Activated CD4-positive, alpha-beta memory T cell treated with anti-CD3 and anti-CD28 coated beads for 36 hours (primary cell): ENCODE measurements at regions of chr17 and their contacts with region 1.

Region 1: DNA sequence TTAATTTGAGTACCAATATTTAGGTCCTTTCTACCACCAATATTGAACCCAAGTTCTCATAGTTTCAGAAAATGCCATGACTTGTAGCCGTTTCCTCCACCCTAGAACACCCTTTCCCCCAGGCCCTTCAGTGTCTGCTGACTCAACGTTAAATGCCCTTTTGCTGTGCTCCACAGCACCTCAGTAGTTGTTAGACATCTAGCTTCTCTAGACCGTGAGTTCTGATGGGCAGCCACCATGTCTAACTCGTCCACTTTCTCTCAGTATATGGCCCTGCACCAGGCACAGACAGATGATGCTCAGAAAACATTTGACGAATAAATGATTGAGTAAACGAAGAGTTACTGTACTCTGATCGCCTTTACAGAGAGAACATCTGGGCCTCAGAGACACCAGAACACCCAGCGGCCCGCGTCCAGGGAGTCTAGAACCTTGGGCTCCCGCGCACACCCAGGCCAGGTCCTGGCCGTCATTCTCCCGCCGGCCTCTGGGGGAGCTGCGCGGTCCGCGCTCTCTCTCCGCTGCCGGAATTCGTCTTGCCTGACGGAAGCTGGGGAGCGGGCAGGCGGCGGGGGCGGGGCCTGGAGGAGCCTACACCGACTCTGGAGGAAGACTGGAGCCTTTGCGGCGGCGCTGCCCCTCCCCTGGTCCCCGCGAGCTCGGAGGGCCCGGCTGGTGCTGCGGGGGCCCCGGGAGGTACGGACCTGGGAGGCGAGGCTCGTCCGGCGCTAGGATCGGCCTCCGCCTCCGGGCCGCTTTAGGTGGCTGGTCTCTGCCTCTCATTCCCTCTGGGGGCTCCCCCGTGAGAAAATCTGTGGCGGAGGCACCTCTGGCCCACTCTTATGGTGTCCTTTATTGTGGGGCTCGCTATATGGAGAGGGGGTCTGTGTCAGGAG is at the start of gene NKIRAS2:
- DNase-seq: peak; percentile 97
- H3K4me3 Mint-ChIP-seq: peak within 1 kb of the TSS; percentile 96
- H3K27ac Mint-ChIP-seq: peak within 1 kb of the TSS; percentile 38
- H3K4me1 Mint-ChIP-seq: peaks cover 47% of the 10 kb centered on the region
- H3K27me3 Mint-ChIP-seq: no peaks in the 10 kb centered on the region
- total RNA-seq, gene NKIRAS2: 15.6 to 16.1 TPM

Region 2: GRCh38 chr17:41864836-41865595 is 154.7 kb before region 1 on chr17 and contains the start of gene KLHL11:
- CTCF ChIA-PET with region 1: interaction called, 3 read pairs
- POLR2A ChIA-PET with region 1: interaction called, 3 read pairs
- intact Hi-C with region 1: loop called (anchors 10 kb)
- DNase-seq: peak; percentile 93
- H3K4me3 Mint-ChIP-seq: no peak within 1 kb of the TSS
- H3K27ac Mint-ChIP-seq: peak within 1 kb of the TSS; percentile 80
- H3K4me1 Mint-ChIP-seq: peaks cover 45% of the 10 kb centered on the region
- H3K27me3 Mint-ChIP-seq: no peaks in the 10 kb centered on the region
- total RNA-seq, gene KLHL11: 23.6 to 25.2 TPM

Region 3: DNA sequence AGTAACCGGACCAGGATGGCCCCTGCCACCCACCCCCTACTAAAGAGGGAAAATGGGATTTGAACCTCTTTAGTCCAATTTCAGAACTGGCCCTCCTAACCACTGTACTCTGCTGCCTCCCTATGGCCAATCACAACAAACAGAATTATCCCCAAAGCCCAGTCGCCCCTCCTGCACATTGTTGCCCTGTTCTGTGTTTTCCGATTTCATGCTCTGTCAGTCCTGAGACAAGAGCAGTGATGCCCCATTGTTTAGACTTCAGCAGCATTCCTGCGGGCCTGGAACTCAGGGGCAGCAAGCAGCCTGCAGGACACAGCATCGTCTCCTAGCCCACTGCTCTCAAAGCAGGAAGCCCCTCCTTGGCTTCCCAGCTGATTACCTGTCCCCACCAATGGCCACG is 134.0 kb before region 1 on chr17:
- CTCF ChIA-PET with region 1: no interaction called
- POLR2A ChIA-PET with region 1: no interaction called
- intact Hi-C with region 1: no loop called
- DNase-seq: peak; percentile 12
- H3K4me3 Mint-ChIP-seq: no peak overlapping the region
- H3K27ac Mint-ChIP-seq: no peak overlapping the region
- H3K4me1 Mint-ChIP-seq: no peaks in the 10 kb centered on the region
- H3K27me3 Mint-ChIP-seq: no peaks in the 10 kb centered on the region

Region 4: DNA sequence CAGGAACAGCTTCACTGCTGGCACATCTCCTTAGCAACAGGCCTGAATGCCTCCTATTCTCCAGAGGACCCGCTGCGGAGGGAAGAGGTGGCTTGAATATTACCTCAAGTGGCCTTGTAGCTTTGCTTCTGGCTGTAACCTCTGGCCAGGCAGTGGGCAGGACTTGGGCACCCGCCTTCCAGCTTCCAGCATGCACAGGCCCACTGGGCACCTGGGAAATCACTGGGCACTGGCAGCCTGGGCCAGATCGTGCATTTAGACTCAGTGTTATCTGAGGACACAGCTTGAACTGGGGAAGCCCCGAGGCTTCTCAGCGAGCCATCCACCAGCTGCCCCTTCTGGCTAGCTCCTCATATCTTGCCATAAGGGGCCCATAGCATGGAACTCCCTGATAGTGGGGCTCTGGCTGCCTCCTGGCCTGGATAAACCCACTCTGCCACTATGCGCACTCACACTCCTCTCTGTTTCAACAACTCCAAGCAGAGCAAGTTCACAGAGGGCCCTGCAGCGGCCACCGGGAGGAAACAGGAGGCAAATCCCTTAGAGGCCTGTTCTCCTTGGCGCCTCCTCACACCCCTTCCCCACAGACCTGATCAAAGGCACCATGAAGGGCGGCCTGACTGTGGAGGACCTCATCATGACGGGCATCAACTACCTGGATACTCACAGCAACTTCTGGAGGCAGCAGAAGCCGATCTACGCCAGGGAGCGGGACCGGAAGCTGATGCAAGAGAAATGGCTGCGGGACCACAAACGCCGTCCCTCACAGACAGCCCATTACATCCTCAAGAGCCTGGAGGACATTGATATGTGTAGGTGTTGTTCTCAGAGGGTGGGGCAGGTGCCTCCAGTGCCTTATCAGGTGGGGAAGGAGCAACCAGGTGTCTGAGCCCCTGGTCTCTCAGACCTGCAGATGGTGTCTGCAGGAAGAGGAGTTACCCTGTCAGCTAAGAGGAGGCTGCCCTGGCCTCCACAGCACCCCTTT is 81.5 kb before region 1 on chr17:
- CTCF ChIA-PET with region 1: no interaction called
- POLR2A ChIA-PET with region 1: no interaction called
- intact Hi-C with region 1: no loop called
- DNase-seq: no peak
- H3K4me3 Mint-ChIP-seq: no peak overlapping the region
- H3K27ac Mint-ChIP-seq: no peak overlapping the region
- H3K4me1 Mint-ChIP-seq: no peaks in the 10 kb centered on the region
- H3K27me3 Mint-ChIP-seq: no peaks in the 10 kb centered on the region

Region 5: GRCh38 chr17:41966463-41967140 is 53.2 kb before region 1 on chr17 and contains the start of gene CNP:
- CTCF ChIA-PET with region 1: interaction called, 58 read pairs
- POLR2A ChIA-PET with region 1: interaction called, 33 read pairs
- intact Hi-C with region 1: loop called (anchors 2 kb)
- DNase-seq: peak; percentile 93
- H3K4me3 Mint-ChIP-seq: peak within 1 kb of the TSS; percentile 78
- H3K27ac Mint-ChIP-seq: peak within 1 kb of the TSS; percentile 83
- H3K4me1 Mint-ChIP-seq: peaks cover 40% of the 10 kb centered on the region
- H3K27me3 Mint-ChIP-seq: no peaks in the 10 kb centered on the region
- total RNA-seq, gene CNP: 66.6 to 68.0 TPM

Region 6: GRCh38 chr17:42050393-42051012 is 30.7 kb after region 1 on chr17 and contains the start of gene C17orf113:
- CTCF ChIA-PET with region 1: interaction called, 11 read pairs
- POLR2A ChIA-PET with region 1: interaction called, 4 read pairs
- intact Hi-C with region 1: no loop called
- DNase-seq: peak; percentile 54
- H3K4me3 Mint-ChIP-seq: peak within 1 kb of the TSS; percentile 66
- H3K27ac Mint-ChIP-seq: no peak within 1 kb of the TSS
- H3K4me1 Mint-ChIP-seq: peaks cover 6% of the 10 kb centered on the region
- H3K27me3 Mint-ChIP-seq: peaks cover 39% of the 10 kb centered on the region
- total RNA-seq, gene C17orf113: 0.15 to 0.26 TPM

Region 7: DNA sequence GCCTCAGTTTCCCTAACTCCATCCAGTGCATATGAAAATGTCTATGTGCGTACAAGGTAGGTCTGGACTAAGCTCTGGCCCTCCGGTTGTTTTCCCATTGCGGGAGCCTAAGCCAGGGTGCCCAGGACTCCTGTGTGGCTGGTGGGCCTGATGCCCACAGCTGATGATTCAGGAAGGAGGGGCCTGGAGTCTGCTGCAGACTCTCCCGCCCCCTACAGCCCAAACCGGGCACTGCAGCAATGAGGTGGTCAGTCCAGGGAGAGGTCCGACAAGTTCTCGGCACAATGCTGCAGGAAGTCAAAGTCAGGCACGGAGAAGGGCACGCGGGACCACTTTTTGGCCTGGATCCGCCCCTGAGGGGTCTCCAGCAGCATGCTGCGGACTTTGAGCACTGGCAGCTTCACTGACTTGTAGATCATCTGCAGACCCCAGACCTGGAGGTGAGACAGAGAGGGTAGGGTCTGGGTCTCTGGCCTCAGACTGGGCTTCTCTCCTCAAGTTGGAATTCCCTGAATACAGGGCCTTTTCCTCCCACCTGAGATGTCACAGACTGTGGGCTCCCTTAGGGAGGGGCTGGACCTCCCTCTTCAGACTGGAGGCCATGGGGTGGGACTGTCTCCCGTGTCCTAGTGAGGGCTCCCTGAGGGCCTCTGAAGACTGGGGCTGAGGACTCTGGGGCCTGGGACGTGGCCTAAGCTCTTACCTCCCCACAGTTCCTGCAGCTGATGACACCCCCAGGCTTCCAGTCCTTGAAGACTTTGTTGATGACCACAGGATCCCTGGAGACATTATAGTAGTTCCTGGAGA is 82.0 kb after region 1 on chr17:
- CTCF ChIA-PET with region 1: interaction called, 211 read pairs
- POLR2A ChIA-PET with region 1: no interaction called
- intact Hi-C with region 1: no loop called
- DNase-seq: peak; percentile 84
- H3K4me3 Mint-ChIP-seq: no peak overlapping the region
- H3K27ac Mint-ChIP-seq: no peak overlapping the region
- H3K4me1 Mint-ChIP-seq: peaks cover 8% of the 10 kb centered on the region
- H3K27me3 Mint-ChIP-seq: peaks cover 13% of the 10 kb centered on the region

Region 8: DNA sequence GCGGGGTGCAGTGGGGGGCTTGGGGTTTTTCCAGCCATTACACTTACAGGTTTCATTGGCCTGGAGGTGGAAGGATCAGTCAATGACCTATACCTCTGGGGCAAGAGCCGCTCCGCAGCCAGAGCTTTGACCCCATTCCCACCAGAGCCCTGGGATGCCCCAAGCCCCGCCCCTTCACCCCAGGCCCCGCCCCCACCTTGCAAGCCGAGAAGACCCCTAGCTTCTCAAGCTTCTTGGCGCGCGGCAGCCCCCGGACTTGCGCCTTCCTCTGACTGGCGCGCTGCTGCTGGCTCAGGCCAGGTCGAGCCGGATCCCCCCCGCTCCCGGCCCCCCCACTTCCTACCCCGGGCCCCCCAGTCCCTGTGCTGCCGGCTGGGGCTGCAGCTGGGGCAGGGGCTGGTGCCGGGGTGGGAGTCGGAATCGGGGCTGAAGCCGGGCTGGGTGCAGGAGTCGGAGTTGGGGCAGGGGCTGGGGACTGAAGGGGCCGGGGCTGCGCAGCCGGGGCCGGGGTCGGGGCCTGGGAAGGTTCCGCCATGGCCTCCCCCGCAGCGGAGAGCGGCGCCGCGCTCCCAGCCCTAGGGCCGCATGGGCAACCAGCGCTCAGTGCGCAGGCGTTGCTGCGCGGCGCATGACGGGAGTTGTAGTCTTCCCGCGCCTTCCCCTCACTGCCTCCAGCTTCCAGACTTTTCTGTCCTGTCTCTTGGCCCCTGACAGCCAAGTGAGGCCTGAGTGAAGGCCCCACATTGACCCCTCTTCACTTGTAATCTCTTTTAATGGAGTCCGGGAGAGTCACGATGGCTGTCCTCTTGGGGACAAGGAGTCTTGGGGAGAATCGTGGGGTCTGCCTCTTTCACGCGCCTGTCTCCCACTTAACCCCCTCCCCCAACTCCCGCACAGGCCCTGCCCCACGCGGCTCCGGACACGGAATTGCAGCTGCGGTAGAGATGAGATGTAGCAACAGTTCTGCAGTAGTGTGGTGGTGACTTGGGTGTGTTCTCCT is 101.3 kb after region 1 on chr17 and contains the start of gene KAT2A:
- CTCF ChIA-PET with region 1: interaction called, 211 read pairs
- POLR2A ChIA-PET with region 1: interaction called, 13 read pairs
- intact Hi-C with region 1: no loop called
- DNase-seq: peak; percentile 85
- H3K4me3 Mint-ChIP-seq: peak within 1 kb of the TSS; percentile 56
- H3K27ac Mint-ChIP-seq: peak within 1 kb of the TSS; percentile 51
- H3K4me1 Mint-ChIP-seq: peaks cover 31% of the 10 kb centered on the region
- H3K27me3 Mint-ChIP-seq: no peaks in the 10 kb centered on the region
- total RNA-seq, gene KAT2A: 38.6 to 41.0 TPM

Region 9: GRCh38 chr17:42155636-42156045 is 135.9 kb after region 1 on chr17:
- CTCF ChIA-PET with region 1: no interaction called
- POLR2A ChIA-PET with region 1: no interaction called
- intact Hi-C with region 1: no loop called
- DNase-seq: no peak
- H3K4me3 Mint-ChIP-seq: peak overlapping the region; percentile 86
- H3K27ac Mint-ChIP-seq: no peak overlapping the region
- H3K4me1 Mint-ChIP-seq: peaks cover 34% of the 10 kb centered on the region
- H3K27me3 Mint-ChIP-seq: no peaks in the 10 kb centered on the region

Region 10: DNA sequence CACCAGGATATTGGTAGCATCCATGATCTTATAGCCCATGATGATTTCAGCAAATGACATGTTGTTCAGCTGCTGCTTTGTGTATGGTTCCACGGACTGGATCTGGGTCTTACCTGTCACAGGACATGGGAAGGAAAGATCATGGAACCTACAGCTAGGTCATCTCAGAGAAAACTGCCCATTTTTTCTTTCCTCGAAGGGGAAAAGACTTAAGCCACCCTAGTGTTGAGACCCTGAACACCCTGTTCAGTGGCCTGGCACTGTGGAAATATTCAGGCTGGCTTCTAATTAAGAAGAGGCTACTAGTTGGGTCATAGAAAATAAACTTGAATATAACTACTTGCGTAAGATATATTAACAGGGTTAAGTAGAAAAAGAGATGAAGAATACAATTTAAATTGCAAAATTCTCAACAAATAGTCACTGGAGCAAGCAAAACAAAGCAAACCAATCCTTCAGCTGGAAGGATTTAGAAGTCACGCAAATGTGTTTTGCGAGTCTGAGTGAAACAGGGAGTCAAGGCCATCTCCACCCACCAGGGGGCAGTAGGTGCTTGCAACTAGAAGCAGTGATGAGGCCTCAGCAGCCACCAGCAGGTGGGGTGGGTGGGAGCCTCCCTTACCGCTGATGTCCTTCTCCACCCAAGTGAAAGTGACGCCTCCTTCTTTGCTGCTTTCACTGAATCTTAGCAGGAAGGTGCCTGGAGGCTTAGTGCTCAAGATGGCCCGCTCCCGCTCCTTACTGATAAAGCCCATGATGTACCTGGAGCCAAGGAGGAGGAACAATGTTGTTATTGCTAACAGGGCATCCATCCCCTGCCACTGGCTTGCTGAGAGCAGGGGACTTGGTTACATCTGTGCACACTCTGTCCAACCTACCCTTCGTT is 302.9 kb after region 1 on chr17:
- CTCF ChIA-PET with region 1: no interaction called
- POLR2A ChIA-PET with region 1: no interaction called
- intact Hi-C with region 1: no loop called
- DNase-seq: peak; percentile 96
- H3K4me3 Mint-ChIP-seq: no peak overlapping the region
- H3K27ac Mint-ChIP-seq: peak overlapping the region; percentile 67
- H3K4me1 Mint-ChIP-seq: peaks cover 37% of the 10 kb centered on the region
- H3K27me3 Mint-ChIP-seq: no peaks in the 10 kb centered on the region